ENCODE measurements at regions of chr2 and their contacts with region 1.

Region 1: GRCh38 chr2:85728883-85729824 is 24.6 kb upstream of the ATOH8 start:
- DNase-seq: peak; percentile 89
- CTCF ChIP-seq: peak; percentile 96

Region 2: DNA sequence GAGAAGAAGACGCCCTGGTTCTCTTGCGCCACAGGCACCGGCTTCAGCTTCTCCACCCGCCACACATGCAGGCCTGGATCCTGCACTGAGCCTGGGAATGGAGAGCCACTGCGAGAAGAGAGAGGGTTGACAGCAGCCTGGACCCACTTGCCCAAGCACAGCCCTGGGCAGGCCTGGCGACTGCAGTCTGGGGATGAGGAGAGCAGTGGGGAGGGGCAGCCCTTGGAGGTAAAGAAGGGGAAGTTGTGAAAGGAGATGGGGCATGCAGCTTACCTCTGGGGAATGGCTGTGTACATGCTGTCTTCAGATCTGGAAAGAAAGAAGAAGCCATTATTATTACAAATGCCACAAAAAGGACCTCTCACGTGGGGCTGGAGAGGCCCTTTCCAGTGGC is 327.3 kb before region 1 on chr2:
- CTCF ChIA-PET with region 1: no interaction called
- POLR2A ChIA-PET with region 1: no interaction called
- DNase-seq: no peak
- CTCF ChIP-seq: no peak

Region 3: DNA sequence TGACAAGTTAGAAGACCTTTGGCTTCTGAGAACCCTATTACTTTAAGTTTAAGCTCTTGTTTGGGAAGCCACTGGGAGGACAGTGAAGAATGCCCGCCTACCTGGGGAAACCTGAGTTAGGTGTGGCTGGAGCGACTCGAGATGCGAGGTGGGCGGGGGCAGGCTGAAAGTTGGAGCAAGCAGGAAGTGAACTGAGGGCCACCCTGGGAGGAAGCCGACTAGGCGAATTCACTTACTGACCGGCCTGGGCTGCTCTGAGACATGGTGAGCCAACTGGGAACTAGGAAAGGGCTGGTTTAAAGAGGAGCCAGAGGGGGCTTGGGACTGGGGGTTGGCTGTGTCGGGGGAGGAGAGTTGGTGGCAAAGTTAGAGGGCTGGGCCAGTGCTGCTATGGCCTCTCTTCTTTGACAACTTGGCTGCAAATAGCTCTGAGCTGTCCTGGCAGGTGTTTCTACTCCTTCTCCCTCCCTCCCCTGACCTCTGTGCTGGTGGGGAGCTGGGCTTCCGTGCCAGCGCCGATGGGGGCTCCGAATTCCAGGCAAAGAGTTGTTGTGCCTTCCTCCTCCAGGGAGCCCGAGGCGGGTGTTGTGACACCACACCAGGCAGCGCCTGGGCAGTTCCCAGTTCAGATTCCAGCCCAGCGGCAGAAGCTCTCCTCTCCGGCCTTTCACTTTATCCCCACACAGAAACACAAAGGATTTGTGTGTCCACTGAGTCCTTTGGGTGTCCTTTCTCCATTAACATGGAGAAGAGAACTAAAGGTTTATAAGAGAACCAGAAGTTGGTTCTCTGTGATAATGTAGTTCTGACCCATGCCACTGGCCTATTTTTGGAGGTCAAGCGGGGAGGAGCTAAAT is 151.5 kb before region 1 on chr2 and contains the start of gene VAMP8:
- CTCF ChIA-PET with region 1: no interaction called
- POLR2A ChIA-PET with region 1: no interaction called
- DNase-seq: peak; percentile 80
- CTCF ChIP-seq: no peak

Region 4: DNA sequence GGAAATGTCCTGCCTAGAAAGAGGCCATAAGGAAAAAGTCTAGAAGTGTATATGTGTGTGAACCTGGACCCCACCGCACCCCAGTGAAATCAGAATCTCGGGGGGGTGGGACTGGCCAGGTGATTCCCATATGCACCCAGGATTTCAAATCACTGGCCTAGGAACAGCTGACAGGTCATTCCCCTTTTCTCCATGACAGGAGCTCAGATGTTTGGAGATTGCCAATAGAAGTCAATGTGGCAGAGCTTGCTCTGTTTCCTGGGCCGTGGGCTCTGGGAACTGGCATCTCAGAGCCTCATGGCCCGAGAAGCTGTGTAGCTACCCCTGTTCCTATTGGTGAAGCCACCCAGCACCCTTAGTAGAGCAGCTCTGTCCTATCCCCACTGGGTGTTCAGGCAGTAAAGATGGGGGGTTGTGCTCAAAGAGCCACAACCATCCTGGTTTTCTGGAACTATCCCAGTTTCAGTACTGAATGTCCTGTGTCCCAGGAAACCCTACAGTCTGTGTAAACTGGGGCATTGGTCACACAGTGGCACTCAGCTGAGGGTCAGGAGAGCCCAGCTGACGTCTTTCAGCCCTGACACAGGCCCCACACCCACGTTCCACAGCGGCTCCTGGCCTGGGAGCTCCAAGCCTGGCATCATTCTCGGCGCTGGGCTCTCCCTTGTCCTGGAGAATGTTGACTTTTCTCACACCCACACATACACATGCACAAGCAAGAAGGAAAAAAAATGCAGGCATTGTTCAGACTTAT is 16.1 kb before region 1 on chr2:
- CTCF ChIA-PET with region 1: interaction called, 27 read pairs
- POLR2A ChIA-PET with region 1: no interaction called
- DNase-seq: no peak
- CTCF ChIP-seq: no peak

Region 5: DNA sequence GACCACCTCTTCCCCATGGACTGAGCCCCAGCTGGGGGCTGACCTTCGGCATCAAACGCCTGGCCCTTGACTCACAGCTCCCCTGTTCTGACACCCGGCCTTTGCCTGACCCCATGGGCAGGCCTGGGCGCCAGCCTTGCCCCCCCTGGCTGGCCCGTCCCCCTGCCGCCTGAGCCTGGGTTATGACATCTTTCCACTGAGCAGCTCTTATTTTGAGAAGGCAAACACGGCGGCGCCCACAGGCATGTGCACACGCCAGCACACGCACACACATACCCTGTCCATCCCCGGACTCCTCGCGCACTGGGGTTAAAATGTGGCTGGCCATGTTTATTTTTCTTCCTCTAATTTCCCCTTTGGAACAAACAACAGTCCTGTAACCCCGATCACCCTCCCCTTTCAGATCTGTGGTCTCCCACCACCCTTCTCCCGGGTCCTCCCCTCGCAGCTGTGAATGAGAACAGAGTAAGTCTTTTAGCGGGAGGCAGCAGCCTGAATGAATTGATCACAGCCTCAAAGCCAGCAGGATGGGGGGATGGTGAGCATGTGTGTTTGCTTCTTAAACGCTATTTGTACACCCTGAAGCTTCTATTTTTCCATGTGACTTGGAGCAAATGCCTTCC is 12.8 kb after region 1 on chr2:
- CTCF ChIA-PET with region 1: interaction called, 32 read pairs
- POLR2A ChIA-PET with region 1: interaction called, 4 read pairs
- DNase-seq: no peak
- CTCF ChIP-seq: no peak

Region 6: DNA sequence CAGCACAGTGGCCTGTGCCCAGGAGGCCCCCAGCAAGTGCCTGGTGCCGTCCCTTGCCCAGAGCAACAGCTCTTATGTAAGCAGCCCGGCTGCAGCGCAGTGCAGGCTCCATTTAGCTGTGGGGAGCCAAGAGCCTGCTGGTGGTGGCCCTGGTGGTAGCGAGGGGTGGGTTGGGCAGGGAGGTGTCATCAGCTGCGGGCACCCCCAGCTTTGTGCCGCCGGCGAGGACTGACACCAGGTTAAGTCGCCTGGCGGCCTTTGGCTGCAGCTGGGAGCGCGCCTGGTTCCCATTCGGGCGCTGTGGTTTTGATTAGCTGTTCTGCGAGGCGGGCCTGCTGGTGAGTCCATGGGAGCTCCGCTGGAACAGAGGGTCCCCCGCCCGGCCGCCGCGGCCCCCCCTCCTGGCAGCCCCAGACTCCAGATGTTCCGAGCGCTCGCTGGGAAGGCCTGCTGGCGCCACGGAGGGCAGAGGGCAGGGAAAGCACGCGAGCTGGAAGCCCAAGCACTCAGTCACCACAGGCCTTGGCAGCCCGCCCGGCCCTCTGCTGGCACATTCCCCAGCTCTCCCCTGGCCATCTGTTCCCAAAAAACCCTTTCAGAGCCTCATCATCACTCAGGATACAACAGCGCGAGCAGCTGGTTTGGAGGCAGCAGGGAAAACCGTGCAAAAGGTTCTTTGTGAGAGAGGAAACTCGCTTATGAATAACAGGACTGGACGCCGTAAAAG is 43.0 kb after region 1 on chr2:
- CTCF ChIA-PET with region 1: interaction called, 10 read pairs
- POLR2A ChIA-PET with region 1: interaction called, 5 read pairs
- DNase-seq: no peak
- CTCF ChIP-seq: no peak

Region 7: GRCh38 chr2:85804583-85804982 is 75.4 kb after region 1 on chr2:
- CTCF ChIA-PET with region 1: interaction called, 23 read pairs
- POLR2A ChIA-PET with region 1: no interaction called
- DNase-seq: no peak
- CTCF ChIP-seq: no peak

Measured in GM10248 (cell line).